HEK293 (cell line): ENCODE measurements at regions of chr19 and their contacts with region 1.

Region 1: GRCh38 chr19:35545001-35545911 is at the start of gene TMEM147:
- H3K4me3 ChIP-seq: peak within 1 kb of the TSS; percentile 62
- H3K27ac ChIP-seq: peak within 1 kb of the TSS; percentile 94
- H3K4me1 ChIP-seq: peaks cover 16% of the 10 kb centered on the region
- CTCF ChIP-seq: no peak; the same call in none of the 2 replicates

Region 2: GRCh38 chr19:35518313-35518712 is 26.9 kb before region 1 on chr19:
- CTCF ChIA-PET with region 1: interaction called, 23 read pairs
- POLR2A ChIA-PET with region 1: no interaction called
- H3K4me3 ChIP-seq: no peak overlapping the region
- H3K27ac ChIP-seq: no peak overlapping the region
- H3K4me1 ChIP-seq: 0 out of 2 replicates have a peak, but pooled peaks cover 3% of the 10 kb centered on the region
- CTCF ChIP-seq: no peak

Region 3: GRCh38 chr19:35578707-35579106 is 33.5 kb after region 1 on chr19:
- CTCF ChIA-PET with region 1: interaction called, 14 read pairs
- POLR2A ChIA-PET with region 1: no interaction called
- H3K4me3 ChIP-seq: no peak overlapping the region
- H3K27ac ChIP-seq: no peak overlapping the region
- H3K4me1 ChIP-seq: no peaks in the 10 kb centered on the region
- CTCF ChIP-seq: no peak

Region 4: DNA sequence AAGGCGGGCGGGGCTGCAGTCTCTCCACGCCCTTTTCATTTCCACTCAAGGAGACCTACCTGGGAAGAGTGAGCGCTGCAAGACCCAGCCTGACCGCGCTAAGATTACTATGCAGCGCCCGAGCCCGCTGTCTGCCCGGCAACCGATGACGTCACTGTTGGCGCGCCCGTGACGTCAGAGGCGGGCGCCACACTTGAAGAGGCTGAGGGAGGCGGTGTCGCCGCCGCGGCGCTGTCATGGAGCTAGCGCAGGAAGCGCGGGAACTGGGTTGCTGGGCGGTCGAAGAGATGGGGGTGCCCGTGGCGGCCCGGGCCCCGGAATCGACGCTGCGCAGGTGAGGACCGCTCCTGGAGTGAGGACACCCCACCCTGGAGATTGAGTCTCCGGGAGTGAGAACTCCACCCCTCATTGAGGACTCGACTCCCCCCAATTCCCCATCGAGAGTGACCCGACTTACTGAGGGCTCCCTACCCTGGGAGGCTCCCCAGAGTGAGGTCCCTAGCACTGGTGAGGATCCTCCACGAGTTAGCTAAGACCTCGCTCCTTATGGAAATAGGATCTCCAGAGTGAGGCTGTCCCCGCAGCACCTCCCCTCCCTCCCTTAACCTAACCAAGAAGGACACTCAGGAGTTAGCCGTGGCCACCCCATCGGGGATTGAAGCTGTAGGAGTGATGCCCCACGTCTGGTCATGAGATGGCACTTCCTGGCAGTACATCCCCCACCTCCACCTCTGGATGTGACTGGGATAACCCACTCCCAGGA is 67.5 kb after region 1 on chr19 and contains the start of gene HAUS5:
- CTCF ChIA-PET with region 1: interaction called, 22 read pairs
- POLR2A ChIA-PET with region 1: interaction called, 7 read pairs
- H3K4me3 ChIP-seq: peak within 1 kb of the TSS; percentile 68
- H3K27ac ChIP-seq: peak within 1 kb of the TSS; percentile 94
- H3K4me1 ChIP-seq: peaks cover 13% of the 10 kb centered on the region
- CTCF ChIP-seq: peak; percentile 88

Region 5: DNA sequence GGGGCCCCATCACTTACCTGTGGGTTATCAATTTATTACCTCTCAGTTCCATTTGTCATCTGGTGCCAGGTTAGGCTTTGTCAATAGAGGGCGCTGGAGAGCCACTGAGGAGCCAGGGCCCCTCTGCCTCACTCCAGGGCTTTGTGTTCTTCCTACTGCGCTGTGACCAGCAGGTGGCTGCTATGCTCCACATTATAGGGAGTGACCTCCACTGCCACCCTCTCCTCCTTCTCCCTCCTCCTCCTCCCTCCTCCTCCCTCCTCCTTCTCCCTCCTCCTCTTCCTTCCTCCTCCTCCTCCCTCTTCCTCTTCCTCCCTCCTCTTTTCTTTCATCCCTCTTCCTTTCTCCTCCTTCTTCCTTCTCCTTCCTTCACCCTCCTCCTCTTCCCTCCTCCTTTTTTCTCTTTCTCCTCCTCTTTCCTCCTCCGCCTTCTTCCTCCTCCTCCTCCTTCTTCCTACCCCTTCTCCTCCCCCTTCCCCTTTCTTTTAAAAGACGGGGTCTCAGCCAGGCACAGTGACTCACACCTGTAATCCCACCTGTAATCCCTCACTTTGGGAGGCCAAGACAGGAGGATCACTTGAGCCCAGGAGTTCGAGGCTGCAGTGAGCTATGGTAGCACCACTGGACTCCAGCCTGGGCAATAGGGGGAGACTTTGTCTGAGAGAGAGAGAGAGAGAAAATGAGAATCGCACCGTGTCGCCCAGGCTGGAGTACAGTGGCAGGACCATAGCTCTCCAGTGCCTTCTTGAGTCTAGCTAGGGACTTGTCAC is 148.8 kb after region 1 on chr19:
- CTCF ChIA-PET with region 1: interaction called, 14 read pairs
- POLR2A ChIA-PET with region 1: no interaction called
- H3K4me3 ChIP-seq: no peak overlapping the region
- H3K27ac ChIP-seq: no peak overlapping the region
- H3K4me1 ChIP-seq: no peaks in the 10 kb centered on the region
- CTCF ChIP-seq: peak; percentile 100

Region 6: DNA sequence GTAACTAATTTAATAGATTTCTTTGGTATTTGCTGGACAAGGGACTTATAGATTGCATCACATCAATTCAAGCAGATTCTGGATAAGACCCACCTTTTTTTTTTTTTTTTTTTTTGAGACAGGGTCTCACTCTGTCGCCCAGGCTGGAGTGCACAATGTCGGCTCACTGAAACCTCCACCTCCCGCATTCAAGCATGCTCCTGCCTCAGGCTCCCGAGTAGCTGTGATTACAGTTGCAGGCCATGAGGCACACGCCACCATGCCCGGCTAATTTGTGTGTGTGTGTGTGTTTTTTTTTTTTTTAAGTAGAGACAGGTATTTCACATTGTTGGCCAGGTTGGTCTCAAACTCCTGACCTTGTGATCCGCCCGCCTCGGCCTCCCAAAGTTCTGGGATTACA is 271.6 kb after region 1 on chr19:
- CTCF ChIA-PET with region 1: interaction called, 16 read pairs
- POLR2A ChIA-PET with region 1: no interaction called
- H3K4me3 ChIP-seq: no peak overlapping the region
- H3K27ac ChIP-seq: no peak overlapping the region
- H3K4me1 ChIP-seq: peaks cover 4% of the 10 kb centered on the region
- CTCF ChIP-seq: no peak